K562 (cell line): ENCODE measurements at regions of chr7 and their contacts with region 1.

Region 1: DNA sequence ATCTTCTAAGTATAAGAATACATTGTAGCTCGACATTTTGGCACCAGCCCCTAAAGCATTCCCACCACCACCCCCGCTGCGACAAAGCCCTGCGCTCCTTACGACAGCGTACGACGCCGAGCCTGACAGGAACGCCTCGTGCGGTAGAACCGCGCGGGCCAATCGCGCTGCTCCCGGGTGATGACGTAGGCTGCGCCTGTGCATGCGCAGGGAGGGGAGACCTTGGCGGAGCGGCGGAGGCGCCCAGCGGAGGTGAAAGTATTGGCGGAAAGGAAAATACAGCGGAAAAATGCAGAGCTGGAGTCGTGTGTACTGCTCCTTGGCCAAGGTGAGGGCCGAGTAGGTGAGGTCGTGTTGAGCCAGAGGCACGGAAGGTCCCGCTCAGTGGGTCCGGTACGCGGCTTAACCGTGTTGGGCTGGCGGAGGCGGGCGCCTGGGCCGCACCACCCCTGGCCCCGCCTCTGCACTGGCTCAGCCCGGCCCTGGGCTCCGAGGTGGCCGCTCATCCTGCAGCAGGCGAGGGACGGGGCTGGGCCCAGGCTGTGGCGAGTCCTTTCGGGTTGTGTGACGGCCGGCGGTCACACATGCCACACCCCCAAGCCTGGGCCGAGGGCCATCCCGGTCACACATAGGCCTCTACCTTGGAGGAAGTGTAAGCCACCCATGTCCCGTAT is at the start of gene DLD:
- DNase-seq: peak; percentile 98 to 99 (median 98)
- ATAC-seq: peak; percentile 96
- H3K4me3 ChIP-seq: peak within 1 kb of the TSS; percentile 55
- H3K27ac ChIP-seq: peak within 1 kb of the TSS; percentile 93
- H3K4me1 ChIP-seq: peaks cover 12 to 27% of the 10 kb centered on the region in 2 experiments; a peak in 4 of 5 replicates
- H3K27me3 ChIP-seq: no peaks in the 10 kb centered on the region; a peak in 1 of 5 replicates
- CTCF ChIP-seq: 0 out of 6 replicates have a peak, but pooled peaks of 1 of the 3 experiments have one; percentile 6
- EP300 ChIP-seq: 0 out of 2 replicates have a peak, but pooled peaks have one; percentile 17
- POLR2A ChIP-seq: peak; percentile 99
- RAD21 ChIP-seq: no peak
- polyA plus RNA-seq, gene DLD: 406 to 588 TPM

Region 2: DNA sequence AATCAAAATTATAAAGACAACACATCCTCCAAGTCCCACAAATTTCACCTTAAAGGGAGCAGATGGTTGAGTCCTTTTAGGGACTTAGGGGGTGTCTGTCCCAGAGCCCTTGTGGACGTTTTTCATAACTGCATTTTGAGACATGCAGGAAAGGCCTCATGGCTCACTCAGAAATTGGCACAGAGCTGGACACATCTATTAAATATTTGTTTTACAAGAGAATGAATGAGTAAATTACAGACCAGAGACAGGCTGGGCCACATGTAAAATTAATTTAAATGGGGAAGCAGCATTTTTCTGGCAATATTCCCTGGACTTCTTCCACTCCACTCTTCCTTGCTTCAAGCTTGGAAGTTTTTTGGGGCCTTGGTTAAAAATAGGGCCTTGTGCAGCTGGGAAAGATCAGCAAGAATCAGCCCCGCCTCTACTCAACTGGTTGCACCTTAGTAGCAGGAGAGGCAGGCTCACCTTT is 91.9 kb after region 1 on chr7:
- CTCF ChIA-PET with region 1: no interaction called
- POLR2A ChIA-PET with region 1: no interaction called
- in situ Hi-C with region 1: no loop called
- intact Hi-C with region 1: no loop called
- DNase-seq: no peak
- ATAC-seq: peak; percentile 82
- H3K4me3 ChIP-seq: no peak overlapping the region
- H3K27ac ChIP-seq: no peak overlapping the region
- H3K4me1 ChIP-seq: no peaks in the 10 kb centered on the region
- H3K27me3 ChIP-seq: no peaks in the 10 kb centered on the region
- CTCF ChIP-seq: peak; percentile 20 to 25 (median 25); a peak in 1 of 6 replicates
- EP300 ChIP-seq: no peak
- POLR2A ChIP-seq: no peak
- RAD21 ChIP-seq: no peak

Region 3: GRCh38 chr7:108016841-108017775 is 126.0 kb after region 1 on chr7:
- CTCF ChIA-PET with region 1: no interaction called
- POLR2A ChIA-PET with region 1: no interaction called
- in situ Hi-C with region 1: no loop called
- intact Hi-C with region 1: loop called (anchors 5 kb)
- DNase-seq: peak in 2 of 4 experiments; percentile 45
- ATAC-seq: peak; percentile 68
- H3K4me3 ChIP-seq: no peak overlapping the region
- H3K27ac ChIP-seq: no peak overlapping the region
- H3K4me1 ChIP-seq: peaks cover 5 to 24% of the 10 kb centered on the region in 2 experiments
- H3K27me3 ChIP-seq: no peaks in the 10 kb centered on the region; a peak in 1 of 5 replicates
- CTCF ChIP-seq: peak; percentile 55 to 67 (median 60); a peak in 5 of 6 replicates
- EP300 ChIP-seq: no peak
- POLR2A ChIP-seq: no peak
- RAD21 ChIP-seq: peak; percentile 51 to 60

Region 4: DNA sequence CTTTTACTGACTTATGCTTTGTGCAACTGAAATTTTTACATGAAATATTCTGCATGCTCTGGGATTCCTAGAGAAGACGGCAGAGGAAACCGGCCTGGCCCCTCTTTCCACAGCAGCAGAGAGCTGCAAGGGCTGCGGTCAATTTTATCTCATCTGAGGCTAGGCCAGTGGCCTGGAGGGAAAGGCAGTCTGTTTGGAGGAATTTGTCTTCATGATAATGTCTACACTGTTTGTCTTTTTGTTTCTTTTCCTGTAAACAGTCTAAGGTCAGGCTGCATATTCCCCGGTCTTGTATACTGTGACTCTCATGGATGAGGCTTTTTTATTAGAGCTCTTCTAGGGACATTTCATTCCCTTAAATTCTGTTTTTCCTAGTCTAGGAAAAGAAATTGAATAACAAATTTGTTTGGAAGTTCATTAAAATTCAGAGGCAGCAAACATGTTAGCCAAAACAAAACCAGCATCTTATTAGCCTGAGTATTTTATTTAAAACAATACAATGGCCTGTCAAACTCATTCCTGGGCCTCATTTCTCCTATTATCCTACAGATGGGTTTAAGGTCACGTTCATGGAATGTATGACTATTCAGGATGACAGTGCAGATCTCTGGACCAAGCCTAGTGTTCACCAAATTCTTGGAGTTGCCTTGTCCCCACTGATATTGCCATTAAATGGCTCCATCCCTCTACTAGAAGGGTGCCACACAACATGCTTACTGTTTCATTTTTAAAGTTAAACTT is 212.6 kb after region 1 on chr7:
- CTCF ChIA-PET with region 1: no interaction called
- POLR2A ChIA-PET with region 1: no interaction called
- in situ Hi-C with region 1: no loop called
- intact Hi-C with region 1: loop called (anchors 5 kb)
- DNase-seq: peak; percentile 39 to 86 (median 62)
- ATAC-seq: peak; percentile 94
- H3K4me3 ChIP-seq: no peak overlapping the region
- H3K27ac ChIP-seq: peak overlapping the region; percentile 72
- H3K4me1 ChIP-seq: peaks cover 14 to 24% of the 10 kb centered on the region in 2 experiments
- H3K27me3 ChIP-seq: no peaks in the 10 kb centered on the region
- CTCF ChIP-seq: no peak
- EP300 ChIP-seq: peak; percentile 45; the same call in 1 of the 2 replicates
- POLR2A ChIP-seq: no peak
- RAD21 ChIP-seq: no peak; a peak in 2 of 4 replicates